ENCODE measurements at regions of chr6 and their contacts with region 1.

Region 1: GRCh38 chr6:17610835-17611234 is 10.7 kb downstream of the FAM8A1 start:
- DNase-seq: no peak
- ATAC-seq: no peak
- H3K4me3 ChIP-seq: no peak overlapping the region
- H3K27ac ChIP-seq: no peak overlapping the region
- H3K4me1 ChIP-seq: no peaks in the 10 kb centered on the region
- H3K27me3 ChIP-seq: no peaks in the 10 kb centered on the region
- CTCF ChIP-seq: no peak
- EP300 ChIP-seq: no peak
- POLR2A ChIP-seq: no peak
- RAD21 ChIP-seq: no peak

Region 2: DNA sequence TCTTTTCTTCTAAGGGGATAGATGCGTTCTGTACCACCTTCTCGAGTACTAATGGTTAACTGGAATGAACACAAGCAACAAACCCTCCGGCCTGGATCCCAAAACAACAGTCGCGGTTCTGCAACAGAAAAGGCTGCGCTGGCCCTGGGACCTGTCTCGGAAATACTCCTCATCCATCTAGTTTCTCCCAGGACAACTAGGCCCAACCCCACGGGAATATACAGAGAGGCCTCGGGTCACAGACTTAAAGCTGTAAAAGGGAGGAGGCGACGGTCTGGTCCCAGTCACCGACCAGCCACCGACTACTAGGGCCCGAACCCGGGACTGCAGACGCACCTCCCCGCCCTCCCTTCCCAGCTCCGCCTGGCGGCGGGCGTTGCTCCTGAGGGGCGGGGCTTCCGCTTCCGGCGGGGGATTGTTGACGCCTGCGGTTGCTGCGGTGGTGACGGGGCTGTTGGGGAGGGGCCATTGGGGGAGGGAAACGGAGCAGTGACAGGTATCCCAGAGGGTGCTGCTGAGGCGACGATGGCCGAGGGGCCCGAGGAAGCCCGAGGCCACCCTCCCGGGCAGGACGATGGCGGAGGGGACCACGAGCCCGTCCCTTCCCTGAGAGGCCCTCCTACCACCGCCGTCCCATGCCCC is 10.8 kb before region 1 on chr6 and contains the start of gene FAM8A1:
- CTCF ChIA-PET with region 1: interaction called, 3 read pairs
- POLR2A ChIA-PET with region 1: interaction called, 5 read pairs
- RAD21 ChIA-PET with region 1: interaction called, 4 read pairs
- SMC1A ChIA-PET with region 1: interaction called, 12 read pairs
- in situ Hi-C with region 1: no loop called
- intact Hi-C with region 1: no loop called
- DNase-seq: peak; percentile 66
- ATAC-seq: peak; percentile 90
- H3K4me3 ChIP-seq: peak within 1 kb of the TSS; percentile 95
- H3K27ac ChIP-seq: peak within 1 kb of the TSS; percentile 72
- H3K4me1 ChIP-seq: no peaks in the 10 kb centered on the region; the same call in 1 of the 2 replicates
- H3K27me3 ChIP-seq: no peaks in the 10 kb centered on the region
- CTCF ChIP-seq: peak in 2 of 3 experiments; percentile 23 to 51; a peak in 2 of 6 replicates
- EP300 ChIP-seq: peak in 1 of 2 experiments; percentile 35; a peak in 1 of 4 replicates
- POLR2A ChIP-seq: peak; percentile 76
- RAD21 ChIP-seq: no peak
- polyA plus RNA-seq, gene FAM8A1: 1.4 to 1.5 TPM

Region 3: DNA sequence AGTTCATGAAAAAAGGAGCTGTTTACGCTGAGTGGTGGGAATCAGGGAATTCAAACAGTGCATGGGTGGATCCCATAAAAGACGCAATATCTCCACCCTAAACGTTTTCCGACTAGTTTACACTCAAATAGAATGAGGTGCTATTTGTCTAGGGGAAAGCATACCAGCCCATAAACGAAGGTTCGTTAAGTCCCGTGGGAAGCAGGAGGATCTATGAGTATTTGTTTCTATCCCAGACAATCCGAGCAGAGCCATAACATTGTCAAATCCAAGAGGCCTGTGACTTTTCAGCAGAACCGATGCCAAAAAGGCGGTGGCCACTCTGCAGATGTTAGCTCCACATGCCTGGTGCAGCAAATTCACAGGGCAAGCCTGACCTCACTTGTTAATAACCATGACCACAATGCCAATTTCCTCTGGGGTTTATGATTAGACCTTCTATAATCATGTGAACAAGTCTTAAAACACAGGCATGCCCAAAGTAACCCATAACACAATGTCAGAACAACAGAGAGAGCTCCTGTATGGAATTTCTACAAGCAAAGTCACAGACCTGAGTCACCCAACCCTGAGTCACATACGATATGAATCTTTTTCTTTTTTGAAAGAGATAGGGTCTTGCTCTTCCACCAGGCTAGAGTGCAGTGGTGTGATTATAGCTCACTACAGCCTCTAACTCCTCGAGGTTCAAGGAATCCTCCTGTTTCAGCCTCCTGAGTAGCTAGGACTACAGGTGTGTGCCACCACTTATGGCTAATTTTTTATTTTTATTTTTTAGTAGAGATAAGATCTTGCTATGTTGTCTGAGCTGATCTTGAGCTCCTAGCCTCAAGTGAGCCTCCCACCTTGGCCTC is 253.3 kb after region 1 on chr6:
- CTCF ChIA-PET with region 1: no interaction called
- POLR2A ChIA-PET with region 1: no interaction called
- RAD21 ChIA-PET with region 1: no interaction called
- SMC1A ChIA-PET with region 1: no interaction called
- in situ Hi-C with region 1: no loop called
- intact Hi-C with region 1: no loop called
- DNase-seq: no peak
- ATAC-seq: no peak
- H3K4me3 ChIP-seq: no peak overlapping the region
- H3K27ac ChIP-seq: no peak overlapping the region
- H3K4me1 ChIP-seq: no peaks in the 10 kb centered on the region
- H3K27me3 ChIP-seq: no peaks in the 10 kb centered on the region; a peak in 1 of 4 replicates
- CTCF ChIP-seq: no peak
- EP300 ChIP-seq: no peak
- POLR2A ChIP-seq: no peak
- RAD21 ChIP-seq: no peak

Measured in GM12878 (cell line).